ENCODE measurements at regions of chr10 and their contacts with region 1.

Region 1: GRCh38 chr10:78685466-78686163 is 383.2 kb upstream of the ZMIZ1 start:
- DNase-seq: no peak
- H3K4me3 ChIP-seq: no peak overlapping the region
- H3K27ac ChIP-seq: no peak overlapping the region
- H3K4me1 ChIP-seq: no peaks in the 10 kb centered on the region
- H3K27me3 ChIP-seq: no peaks in the 10 kb centered on the region
- CTCF ChIP-seq: no peak
- EP300 ChIP-seq: no peak
- POLR2A ChIP-seq: no peak

Region 2: DNA sequence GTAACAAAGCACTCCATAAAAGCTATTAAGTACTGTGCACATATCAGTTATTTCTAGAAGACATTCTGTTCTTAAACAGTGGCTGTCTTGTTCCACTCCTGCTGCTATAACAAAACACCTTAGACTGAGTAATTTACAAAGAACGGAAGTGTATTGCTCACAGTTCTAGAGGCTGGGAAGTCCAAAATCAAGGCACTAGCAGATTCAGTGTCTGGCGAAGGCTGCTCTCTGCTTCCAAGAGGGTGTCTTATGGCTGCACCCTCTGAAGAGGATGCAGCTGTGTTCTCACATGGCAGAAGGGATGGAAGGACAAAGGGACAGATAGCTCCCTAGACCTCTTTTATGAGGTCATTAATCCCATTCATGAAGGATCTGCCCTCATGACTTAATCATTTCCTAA is 41.1 kb before region 1 on chr10:
- intact Hi-C with region 1: loop called in 1 of 4 experiments (anchors 1 kb)
- DNase-seq: no peak
- H3K4me3 ChIP-seq: no peak overlapping the region
- H3K27ac ChIP-seq: no peak overlapping the region
- H3K4me1 ChIP-seq: no peaks in the 10 kb centered on the region
- H3K27me3 ChIP-seq: no peaks in the 10 kb centered on the region
- CTCF ChIP-seq: no peak
- EP300 ChIP-seq: no peak
- POLR2A ChIP-seq: no peak

Measured in ovary (tissue), 10 donors.